AG04449 (cell line): ENCODE measurements at regions of chr6 and their contacts with region 1.

Region 1: DNA sequence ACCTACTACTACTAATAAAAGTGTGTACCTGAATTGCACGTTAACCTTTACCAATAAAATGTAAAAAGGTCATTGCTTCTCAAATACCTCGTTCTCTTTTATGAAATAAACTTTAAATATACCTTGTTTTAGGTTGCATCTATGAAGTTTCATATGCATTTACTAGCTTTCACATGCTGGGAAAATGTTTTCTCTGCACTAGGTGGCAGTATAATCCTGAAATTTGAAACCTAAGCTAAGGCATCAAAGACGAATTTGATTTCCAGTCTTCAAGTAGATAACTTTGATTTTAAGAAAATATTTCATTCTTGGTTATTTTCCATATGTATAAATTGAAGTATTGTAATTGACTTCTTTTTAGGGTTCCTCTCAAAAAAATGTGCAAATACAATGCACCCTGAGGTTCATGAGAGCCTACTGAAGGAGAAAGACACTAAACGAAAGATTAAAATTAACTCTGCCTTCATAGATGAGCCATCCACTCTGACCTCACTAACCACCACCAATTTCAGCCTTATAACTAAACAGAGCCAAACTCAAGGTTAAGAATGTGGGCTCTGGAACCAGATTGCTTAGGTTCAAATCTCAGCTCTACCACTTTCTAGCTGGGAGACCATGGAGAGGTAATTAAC is 7.3 kb upstream of the COL9A1 start:
- DNase-seq: no peak
- H3K4me3 ChIP-seq: no peak overlapping the region
- CTCF ChIP-seq: peak; percentile 37

Region 2: DNA sequence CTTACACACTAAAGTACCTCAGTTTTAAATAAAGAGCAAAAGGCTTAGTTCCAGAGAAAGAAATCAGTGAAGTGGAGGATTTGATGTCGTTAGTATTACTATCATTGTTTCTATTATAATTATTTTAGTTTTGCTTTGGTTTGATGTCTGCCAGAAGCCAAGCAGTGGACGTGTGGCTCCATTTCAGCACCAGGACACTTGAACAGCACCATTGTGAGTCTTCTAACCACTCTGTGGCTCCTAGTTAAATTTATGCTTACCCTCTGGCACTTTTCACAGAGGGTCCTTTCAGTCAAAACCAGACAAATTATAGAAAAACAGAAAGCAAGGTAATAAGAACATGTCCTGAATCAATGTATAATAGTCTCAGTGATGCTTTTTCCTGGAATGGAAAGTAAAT is 10.7 kb before region 1 on chr6:
- CTCF ChIA-PET with region 1: interaction called, 25 read pairs
- POLR2A ChIA-PET with region 1: no interaction called
- DNase-seq: no peak
- H3K4me3 ChIP-seq: no peak overlapping the region
- CTCF ChIP-seq: no peak

Region 3: GRCh38 chr6:71012866-71013469 is 702.8 kb after region 1 on chr6:
- CTCF ChIA-PET with region 1: interaction called, 62 read pairs
- POLR2A ChIA-PET with region 1: no interaction called
- DNase-seq: no peak
- H3K4me3 ChIP-seq: no peak overlapping the region
- CTCF ChIP-seq: peak; percentile 66